A549 (cell line): ENCODE measurements at regions of chr19 and their contacts with region 1.

Region 1: DNA sequence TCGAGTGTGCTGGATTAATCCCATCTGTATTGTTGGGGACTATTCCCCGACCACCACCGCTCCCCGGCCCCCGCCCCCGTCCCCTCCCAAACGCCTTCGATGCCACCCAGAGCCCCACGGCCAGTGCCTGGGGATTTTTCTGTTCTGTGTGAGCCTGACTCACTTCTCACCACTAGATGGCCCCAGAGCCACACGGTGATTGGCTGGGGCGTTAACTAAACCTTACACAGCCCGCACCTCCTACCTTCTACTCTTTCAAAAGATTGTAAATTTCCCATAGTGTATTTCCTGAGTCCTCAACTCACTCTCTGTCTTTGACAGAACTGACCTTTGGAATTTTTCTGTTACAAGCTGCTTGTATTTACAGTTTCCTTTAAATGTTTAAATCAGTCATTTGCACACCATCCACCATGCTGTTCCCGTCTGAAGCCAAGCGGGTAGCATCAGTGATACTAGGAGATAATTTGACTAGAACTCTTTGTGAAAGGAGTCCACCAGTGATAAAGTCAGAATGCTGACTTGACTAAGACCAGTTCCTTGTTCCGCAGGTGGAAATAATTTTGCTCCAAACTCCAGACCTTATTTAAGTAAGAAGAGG is 61.4 kb downstream of the RFX2 start:
- DNase-seq: peak; percentile 69 to 71
- ATAC-seq: peak; percentile 99
- H3K4me3 ChIP-seq: no peak overlapping the region
- H3K27ac ChIP-seq: 0 out of 6 replicates have a peak overlapping the region, but pooled peaks of 1 of the 2 experiments have one; percentile 20
- H3K4me1 ChIP-seq: peaks cover 7% of the 10 kb centered on the region
- CTCF ChIP-seq: peak; percentile 85
- EP300 ChIP-seq: no peak
- POLR2A ChIP-seq: no peak
- RAD21 ChIP-seq: peak; percentile 92 to 93

Region 2: GRCh38 chr19:5961969-5962945 is 86.7 kb before region 1 on chr19:
- CTCF ChIA-PET with region 1: no interaction called
- POLR2A ChIA-PET with region 1: no interaction called
- DNase-seq: no peak
- ATAC-seq: no peak; a peak in 1 of 6 replicates
- H3K4me3 ChIP-seq: no peak overlapping the region
- H3K27ac ChIP-seq: no peak overlapping the region
- H3K4me1 ChIP-seq: peaks cover 6% of the 10 kb centered on the region; the same call in 1 of the 3 replicates
- CTCF ChIP-seq: no peak
- EP300 ChIP-seq: no peak
- POLR2A ChIP-seq: no peak
- RAD21 ChIP-seq: no peak

Region 3: DNA sequence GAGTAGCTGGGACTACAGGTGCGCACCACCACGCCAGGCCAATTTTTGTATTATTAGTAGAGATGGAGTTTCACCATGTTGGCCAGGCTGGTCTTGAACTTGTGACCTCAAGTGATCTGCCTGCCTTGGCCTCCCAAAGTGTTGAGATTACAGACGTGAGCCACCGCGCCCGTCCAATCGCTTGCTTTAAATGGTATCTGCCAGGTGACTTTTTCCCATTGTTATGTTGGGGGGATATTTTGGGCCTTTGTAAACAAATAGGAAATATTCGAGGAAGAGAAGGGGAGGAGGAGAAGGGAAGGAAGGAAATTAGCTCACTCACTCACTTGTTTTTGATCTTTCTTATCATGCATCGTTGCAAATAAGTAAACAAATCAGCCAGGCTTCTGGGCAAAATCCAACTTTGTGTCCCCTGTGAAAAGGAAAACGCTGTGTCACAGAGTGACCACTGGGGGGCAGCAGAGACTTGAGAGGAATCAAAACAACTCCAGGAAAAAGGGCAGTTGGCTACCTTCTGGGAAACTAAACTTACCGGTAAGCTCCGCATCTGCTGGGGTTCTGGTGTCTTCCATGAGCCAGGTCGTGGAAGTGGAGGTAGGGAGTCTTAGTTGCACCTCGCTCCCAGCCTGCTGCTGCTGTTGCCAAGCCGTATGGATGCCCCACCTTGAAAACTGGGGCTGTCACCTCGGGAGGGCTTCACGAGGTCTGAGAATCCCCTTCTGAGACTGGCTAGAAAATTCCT is 61.7 kb before region 1 on chr19:
- CTCF ChIA-PET with region 1: interaction called, 61 read pairs
- POLR2A ChIA-PET with region 1: no interaction called
- DNase-seq: peak; percentile 66 to 78
- ATAC-seq: peak; percentile 8 to 58; a peak in 4 of 6 replicates
- H3K4me3 ChIP-seq: peak overlapping the region; percentile 19; the same call in 1 of the 3 replicates
- H3K27ac ChIP-seq: peak overlapping the region in 1 of 2 experiments; percentile 69; a peak in 3 of 6 replicates
- H3K4me1 ChIP-seq: peaks cover 5% of the 10 kb centered on the region; the same call in 1 of the 3 replicates
- CTCF ChIP-seq: peak; percentile 79
- EP300 ChIP-seq: no peak
- POLR2A ChIP-seq: no peak
- RAD21 ChIP-seq: peak; percentile 74 to 75

Region 4: DNA sequence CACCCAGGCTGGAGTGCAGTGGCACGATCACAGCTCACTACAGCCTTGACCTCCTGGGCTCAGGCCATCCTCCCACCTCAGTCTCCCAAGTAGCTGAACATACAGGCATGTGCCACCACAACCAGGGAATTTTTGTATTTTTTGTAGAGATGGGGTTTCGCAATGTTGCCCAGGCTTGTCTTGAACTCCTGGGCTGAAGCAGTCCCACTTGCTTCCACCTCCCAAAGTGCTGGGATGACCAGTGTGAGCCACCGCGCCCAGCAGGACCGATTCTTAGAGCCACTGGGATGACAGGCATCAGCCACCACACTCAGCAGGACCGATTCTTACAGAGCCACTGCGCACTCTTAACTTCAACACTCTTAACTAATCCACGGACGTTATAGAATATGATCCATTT is 16.1 kb before region 1 on chr19:
- CTCF ChIA-PET with region 1: interaction called, 13 read pairs
- POLR2A ChIA-PET with region 1: no interaction called
- DNase-seq: no peak
- ATAC-seq: no peak
- H3K4me3 ChIP-seq: no peak overlapping the region
- H3K27ac ChIP-seq: no peak overlapping the region
- H3K4me1 ChIP-seq: no peaks in the 10 kb centered on the region
- CTCF ChIP-seq: no peak
- EP300 ChIP-seq: no peak
- POLR2A ChIP-seq: no peak
- RAD21 ChIP-seq: no peak

Region 5: DNA sequence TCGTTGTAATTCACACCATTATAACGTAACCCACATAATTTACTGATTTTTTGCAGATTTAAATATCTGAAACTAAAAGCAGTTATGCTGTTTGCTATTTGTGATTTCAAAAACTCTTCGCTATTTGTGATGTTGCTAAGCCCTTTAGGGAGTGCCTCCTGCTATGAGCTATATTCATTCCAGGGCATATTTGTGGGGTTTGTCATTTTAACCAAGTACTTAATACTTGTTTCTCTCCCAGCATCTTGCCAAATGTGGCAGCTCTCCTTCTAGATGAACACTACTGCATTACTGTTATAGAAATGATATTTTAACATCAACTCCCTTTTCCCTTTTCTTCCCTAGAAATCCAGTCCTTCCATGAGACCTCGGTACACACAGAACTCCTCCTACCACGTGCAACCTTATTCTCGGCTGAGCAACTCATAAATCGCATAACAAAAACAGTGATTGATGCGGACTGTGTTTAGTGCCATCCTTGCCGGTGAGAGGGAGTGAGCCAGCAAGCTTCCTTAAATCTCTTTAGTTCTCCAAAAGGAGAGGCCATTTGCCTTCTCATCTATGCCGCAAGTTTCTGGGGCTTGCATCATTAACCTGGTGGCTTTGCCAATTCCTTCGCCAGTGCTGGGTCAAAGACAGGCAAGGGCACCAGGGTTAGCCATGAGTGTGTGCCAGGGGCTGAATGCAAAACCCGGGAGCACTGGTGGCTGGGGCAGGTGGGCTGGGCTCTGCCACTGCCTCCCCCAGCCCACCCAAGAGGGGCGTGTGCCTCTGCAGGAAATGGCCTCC is 28.0 kb after region 1 on chr19:
- CTCF ChIA-PET with region 1: interaction called, 17 read pairs
- POLR2A ChIA-PET with region 1: no interaction called
- DNase-seq: peak in 1 of 2 experiments; percentile 35
- ATAC-seq: peak; percentile 62 to 71; a peak in 3 of 6 replicates
- H3K4me3 ChIP-seq: no peak overlapping the region
- H3K27ac ChIP-seq: peak overlapping the region; percentile 23 to 78; a peak in 5 of 6 replicates
- H3K4me1 ChIP-seq: peaks cover 13% of the 10 kb centered on the region; the same call in 2 of the 3 replicates
- CTCF ChIP-seq: no peak
- EP300 ChIP-seq: no peak
- POLR2A ChIP-seq: no peak
- RAD21 ChIP-seq: no peak

Region 6: DNA sequence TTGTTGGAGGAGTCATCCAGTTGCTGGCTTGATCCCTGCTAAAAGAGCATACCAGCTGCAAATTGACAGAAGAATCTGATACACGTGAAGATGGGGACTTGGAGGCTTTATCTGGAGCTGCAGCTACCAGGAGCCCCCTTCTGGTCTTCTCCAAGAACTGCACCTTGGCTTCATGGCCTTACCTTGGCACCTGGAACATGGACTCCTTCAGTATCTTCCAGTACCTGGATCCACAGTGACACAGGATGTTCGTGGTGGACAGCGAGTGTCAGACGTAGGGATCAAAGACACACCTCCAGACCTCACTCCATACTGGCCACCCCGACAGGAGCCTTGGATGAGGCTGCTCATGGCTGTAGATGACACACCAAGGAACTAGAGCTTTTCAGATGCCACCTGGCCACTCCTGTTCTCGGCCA is 76.7 kb after region 1 on chr19:
- CTCF ChIA-PET with region 1: interaction called, 144 read pairs
- POLR2A ChIA-PET with region 1: interaction called, 3 read pairs
- DNase-seq: peak in 1 of 2 experiments; percentile 83
- ATAC-seq: peak; percentile 90 to 93
- H3K4me3 ChIP-seq: no peak overlapping the region
- H3K27ac ChIP-seq: no peak overlapping the region
- H3K4me1 ChIP-seq: no peaks in the 10 kb centered on the region
- CTCF ChIP-seq: peak; percentile 79
- EP300 ChIP-seq: no peak
- POLR2A ChIP-seq: no peak
- RAD21 ChIP-seq: peak; percentile 87 to 90

Region 7: GRCh38 chr19:6246174-6247006 is 197.5 kb after region 1 on chr19:
- CTCF ChIA-PET with region 1: no interaction called
- POLR2A ChIA-PET with region 1: no interaction called
- DNase-seq: no peak
- ATAC-seq: no peak
- H3K4me3 ChIP-seq: no peak overlapping the region
- H3K27ac ChIP-seq: no peak overlapping the region
- H3K4me1 ChIP-seq: no peaks in the 10 kb centered on the region
- CTCF ChIP-seq: no peak
- EP300 ChIP-seq: no peak
- POLR2A ChIP-seq: no peak
- RAD21 ChIP-seq: no peak